Activated CD4-positive, alpha-beta memory T cell treated with anti-CD3 and anti-CD28 coated beads for 36 hours (primary cell): ENCODE measurements at regions of chr19 and their contacts with region 1.

Region 1: DNA sequence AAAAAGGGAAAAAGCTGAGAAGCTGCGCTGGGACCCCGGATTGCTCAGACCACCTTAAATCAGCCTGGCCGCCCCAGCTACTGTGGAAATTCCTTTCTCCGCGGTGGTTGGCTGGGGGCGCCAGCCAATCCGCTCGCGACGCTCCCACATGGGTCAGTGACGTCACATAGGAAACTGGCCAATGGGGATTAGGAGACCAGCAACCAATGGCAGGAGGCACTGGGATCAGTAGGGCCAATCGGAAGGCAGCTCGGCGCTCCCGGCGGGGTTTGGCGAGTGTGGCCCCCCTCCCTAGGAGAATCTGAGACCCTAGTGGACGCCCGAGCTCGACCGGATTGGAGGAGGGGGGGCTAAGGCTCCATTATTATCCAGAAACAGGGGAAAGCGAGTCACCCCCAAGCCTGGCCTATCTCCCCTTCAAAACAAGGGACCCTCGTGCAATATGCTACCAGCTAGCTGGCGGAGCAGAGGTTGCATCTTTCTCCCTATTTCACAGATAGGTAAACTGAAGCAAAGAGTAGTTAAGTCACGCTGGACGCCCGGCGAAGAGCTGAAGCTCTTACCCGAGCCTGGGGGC is 6.5 kb upstream of the TLE2 start:
- DNase-seq: peak; percentile 97
- H3K4me3 Mint-ChIP-seq: peak overlapping the region; percentile 86
- H3K27ac Mint-ChIP-seq: peak overlapping the region; percentile 92
- H3K4me1 Mint-ChIP-seq: peaks cover 15% of the 10 kb centered on the region
- H3K27me3 Mint-ChIP-seq: peaks cover 1% of the 10 kb centered on the region

Region 2: DNA sequence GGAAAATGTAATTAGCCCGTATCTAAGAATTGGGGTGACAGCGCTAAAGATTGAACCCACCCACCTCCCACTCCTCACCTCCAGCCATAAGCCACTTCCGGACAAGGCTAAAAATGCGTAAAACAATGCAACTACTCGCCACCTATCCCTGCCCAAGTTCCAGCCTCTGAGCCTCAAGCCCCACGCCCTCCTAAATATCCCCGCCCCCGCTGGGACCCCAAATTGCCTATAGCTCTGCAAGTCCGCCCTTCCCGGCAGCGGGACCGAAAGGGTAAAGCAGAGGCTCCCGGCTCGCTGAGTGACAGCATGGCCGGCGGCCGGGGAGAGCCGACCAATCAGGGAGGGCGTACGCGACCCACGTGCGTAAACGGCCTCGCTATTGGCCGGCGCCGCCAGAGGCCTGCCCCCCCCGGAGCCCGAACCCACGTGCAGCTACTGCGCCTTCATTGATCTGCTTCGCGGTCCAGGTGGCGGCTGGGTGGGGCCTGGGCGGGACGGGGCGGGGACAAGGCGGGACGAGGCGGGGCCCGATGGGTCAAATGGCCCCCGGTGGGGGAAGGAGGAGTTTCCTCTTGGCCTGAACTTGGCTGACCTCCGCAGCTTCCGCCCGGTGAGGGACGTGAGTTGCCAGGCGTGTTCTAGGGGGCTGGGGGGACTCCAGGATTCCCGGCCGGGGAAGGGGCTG is 58.5 kb before region 1 on chr19 and contains the start of gene TLE6:
- CTCF ChIA-PET with region 1: interaction called, 4 read pairs
- POLR2A ChIA-PET with region 1: interaction called, 7 read pairs
- intact Hi-C with region 1: loop called (anchors 2 kb)
- DNase-seq: peak; percentile 97
- H3K4me3 Mint-ChIP-seq: peak within 1 kb of the TSS; percentile 89
- H3K27ac Mint-ChIP-seq: peak within 1 kb of the TSS; percentile 72
- H3K4me1 Mint-ChIP-seq: peaks cover 13% of the 10 kb centered on the region
- H3K27me3 Mint-ChIP-seq: peaks cover 7% of the 10 kb centered on the region
- total RNA-seq, gene TLE6: 2.5 to 2.6 TPM

Region 3: DNA sequence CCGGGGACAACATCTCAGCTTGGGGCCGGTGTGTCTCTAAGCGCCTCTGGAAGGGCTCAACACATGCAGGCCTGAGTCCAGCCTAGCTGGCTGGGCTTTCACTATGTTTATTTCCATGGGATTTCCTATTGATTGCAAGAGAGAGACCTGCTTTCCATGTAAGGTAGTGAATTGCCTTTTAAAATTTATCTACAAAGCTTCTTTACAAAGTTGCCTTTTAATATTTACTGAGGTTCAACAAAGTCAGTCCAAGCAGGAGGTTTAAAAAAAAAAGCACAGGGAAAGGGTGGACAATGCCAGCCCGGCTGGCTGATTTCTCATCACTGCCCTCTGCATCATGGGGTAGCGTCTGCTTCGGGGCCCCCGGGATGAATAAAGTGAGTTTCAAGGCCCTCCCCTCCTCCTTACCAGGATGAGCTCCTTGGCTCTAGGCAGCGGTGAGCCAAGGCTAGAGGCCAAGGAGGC is 22.3 kb before region 1 on chr19:
- CTCF ChIA-PET with region 1: no interaction called
- POLR2A ChIA-PET with region 1: no interaction called
- intact Hi-C with region 1: no loop called
- DNase-seq: no peak
- H3K4me3 Mint-ChIP-seq: no peak overlapping the region
- H3K27ac Mint-ChIP-seq: no peak overlapping the region
- H3K4me1 Mint-ChIP-seq: no peaks in the 10 kb centered on the region
- H3K27me3 Mint-ChIP-seq: no peaks in the 10 kb centered on the region

Region 4: GRCh38 chr19:3062168-3063102 is 26.8 kb after region 1 on chr19 and contains the start of gene TLE5:
- CTCF ChIA-PET with region 1: interaction called, 5 read pairs
- POLR2A ChIA-PET with region 1: interaction called, 12 read pairs
- intact Hi-C with region 1: loop called (anchors 2 kb)
- DNase-seq: peak; percentile 74
- H3K4me3 Mint-ChIP-seq: peak within 1 kb of the TSS; percentile 85
- H3K27ac Mint-ChIP-seq: peak within 1 kb of the TSS; percentile 97
- H3K4me1 Mint-ChIP-seq: peaks cover 29% of the 10 kb centered on the region
- H3K27me3 Mint-ChIP-seq: no peaks in the 10 kb centered on the region
- total RNA-seq, gene TLE5: 411 to 426 TPM

Region 5: DNA sequence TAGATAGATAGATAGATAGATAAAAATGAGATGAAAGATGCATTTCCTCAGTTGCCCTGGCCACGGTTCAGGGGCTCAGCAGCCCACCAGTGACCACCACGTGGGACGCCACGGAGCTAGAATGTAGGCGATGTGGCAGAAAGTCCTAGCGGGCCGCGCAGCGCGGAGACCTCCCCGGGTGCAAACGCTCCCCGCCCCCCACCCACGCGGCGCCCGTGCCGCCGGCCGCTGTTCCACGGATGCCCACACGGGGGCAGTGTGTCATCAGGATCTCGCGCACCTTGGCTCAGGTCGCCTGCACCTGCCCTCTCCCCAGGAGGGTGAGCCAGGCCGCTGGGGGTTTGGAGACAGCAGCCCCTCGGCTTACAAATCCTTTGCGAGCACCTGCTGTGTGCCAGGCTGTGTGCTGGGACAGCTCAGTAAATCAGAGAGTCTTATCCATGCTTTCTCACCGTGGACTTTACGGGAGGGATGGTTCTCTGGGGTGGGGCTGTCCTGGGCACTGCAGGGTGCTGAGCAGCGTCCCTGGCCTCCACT is 40.3 kb after region 1 on chr19:
- CTCF ChIA-PET with region 1: interaction called, 18 read pairs
- POLR2A ChIA-PET with region 1: interaction called, 4 read pairs
- intact Hi-C with region 1: no loop called
- DNase-seq: peak; percentile 85
- H3K4me3 Mint-ChIP-seq: no peak overlapping the region
- H3K27ac Mint-ChIP-seq: no peak overlapping the region
- H3K4me1 Mint-ChIP-seq: peaks cover 4% of the 10 kb centered on the region
- H3K27me3 Mint-ChIP-seq: no peaks in the 10 kb centered on the region

Region 6: DNA sequence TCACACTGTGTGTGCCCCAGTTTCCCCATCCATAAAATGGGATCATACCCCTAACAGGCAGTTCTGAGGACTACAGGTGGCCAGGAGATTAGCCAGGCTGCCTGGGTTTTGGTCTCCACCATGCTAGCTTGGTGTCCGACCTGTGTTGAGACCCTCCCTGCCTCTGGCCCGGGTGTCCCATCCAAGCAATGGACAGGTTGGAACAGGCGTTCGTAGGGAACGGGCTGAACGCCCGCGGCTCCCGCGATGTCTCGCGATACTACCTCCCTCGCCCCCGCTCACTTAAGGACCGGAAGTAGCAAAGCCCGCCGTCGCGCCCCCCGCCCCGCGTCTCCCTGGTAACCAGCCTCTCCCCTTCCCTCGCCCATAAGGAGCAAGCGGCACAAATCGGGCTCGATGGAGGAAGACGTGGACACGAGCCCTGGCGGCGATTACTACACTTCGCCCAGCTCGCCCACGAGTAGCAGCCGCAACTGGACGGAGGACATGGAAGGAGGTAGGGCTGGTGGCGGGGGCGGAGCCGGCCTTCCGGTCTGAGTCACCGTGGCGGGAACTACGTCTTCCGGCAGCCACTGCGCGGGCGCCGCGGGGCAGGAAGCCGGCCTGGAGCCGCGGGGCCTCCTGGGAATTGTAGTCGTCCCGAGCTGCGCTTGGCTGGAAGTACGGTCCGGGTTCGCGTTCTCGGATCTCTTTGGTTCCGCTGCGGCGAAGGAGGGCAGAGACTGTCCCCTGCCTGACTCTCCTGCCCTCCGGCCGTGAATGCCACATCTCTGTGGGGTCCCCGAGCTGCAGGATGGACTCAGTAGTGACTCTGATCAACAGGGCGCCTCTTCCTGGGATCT is 399.3 kb after region 1 on chr19:
- CTCF ChIA-PET with region 1: no interaction called
- POLR2A ChIA-PET with region 1: no interaction called
- intact Hi-C with region 1: loop called (anchors 1 kb)
- DNase-seq: peak; percentile 97
- H3K4me3 Mint-ChIP-seq: peak overlapping the region; percentile 96
- H3K27ac Mint-ChIP-seq: peak overlapping the region; percentile 98
- H3K4me1 Mint-ChIP-seq: peaks cover 16% of the 10 kb centered on the region
- H3K27me3 Mint-ChIP-seq: no peaks in the 10 kb centered on the region